Sigmoid colon (tissue), 7 donors: ENCODE measurements at regions of chr11 and their contacts with region 1.

Region 1: GRCh38 chr11:47552566-47553416 is at the start of gene CELF1:
- DNase-seq: peak; percentile 95
- H3K4me3 ChIP-seq: peak within 1 kb of the TSS; percentile 85 to 97 (median 94)
- H3K27ac ChIP-seq: peak within 1 kb of the TSS; percentile 87 to 95 (median 94)
- H3K4me1 ChIP-seq: peaks cover 0 to 50% (median 35%) of the 10 kb centered on the region in 4 donors
- H3K27me3 ChIP-seq: no peaks in the 10 kb centered on the region
- CTCF ChIP-seq: peak; percentile 26 to 95 (median 62)
- EP300 ChIP-seq: no peak
- POLR2A ChIP-seq: peak in 1 of 2 donors; percentile 36
- total RNA-seq, gene CELF1: 87.2 to 188 (median 114) TPM

Region 2: GRCh38 chr11:47426061-47426956 is 126.5 kb before region 1 on chr11 and contains the start of gene PSMC3:
- intact Hi-C with region 1: loop called (anchors 2 kb)
- DNase-seq: peak; percentile 99
- H3K4me3 ChIP-seq: peak within 1 kb of the TSS; percentile 86 to 97 (median 91)
- H3K27ac ChIP-seq: peak within 1 kb of the TSS; percentile 91 to 95 (median 92)
- H3K4me1 ChIP-seq: peaks cover 0 to 23% (median 19%) of the 10 kb centered on the region in 4 donors
- H3K27me3 ChIP-seq: no peaks in the 10 kb centered on the region
- CTCF ChIP-seq: no peak
- EP300 ChIP-seq: no peak
- POLR2A ChIP-seq: peak; percentile 52 to 65
- total RNA-seq, gene PSMC3: 104 to 202 (median 178) TPM

Region 3: GRCh38 chr11:47466701-47467250 is 86.0 kb before region 1 on chr11:
- intact Hi-C with region 1: loop called (anchors 5 kb)
- DNase-seq: peak; percentile 82
- H3K4me3 ChIP-seq: no peak overlapping the region
- H3K27ac ChIP-seq: peak overlapping the region; percentile 64 to 78 (median 71)
- H3K4me1 ChIP-seq: peaks cover 0 to 70% (median 64%) of the 10 kb centered on the region in 4 donors
- H3K27me3 ChIP-seq: no peaks in the 10 kb centered on the region
- CTCF ChIP-seq: no peak
- EP300 ChIP-seq: no peak
- POLR2A ChIP-seq: no peak

Region 4: GRCh38 chr11:47514825-47515647 is 37.8 kb before region 1 on chr11:
- intact Hi-C with region 1: loop called (anchors 5 kb)
- DNase-seq: no peak
- H3K4me3 ChIP-seq: no peak overlapping the region
- H3K27ac ChIP-seq: peak overlapping the region in 3 of 4 donors; percentile 39 to 67 (median 67)
- H3K4me1 ChIP-seq: peaks cover 0 to 100% (median 91%) of the 10 kb centered on the region in 4 donors
- H3K27me3 ChIP-seq: no peaks in the 10 kb centered on the region
- CTCF ChIP-seq: no peak
- EP300 ChIP-seq: no peak
- POLR2A ChIP-seq: no peak